HCT116 (cell line): ENCODE measurements at regions of chr7 and their contacts with region 1.

Region 1: GRCh38 chr7:93799750-93800357 is 90.7 kb downstream of the TFPI2 start:
- DNase-seq: no peak
- ATAC-seq: no peak; the same call in 1 of the 2 replicates
- H3K4me3 ChIP-seq: no peak overlapping the region
- H3K27ac ChIP-seq: no peak overlapping the region
- H3K4me1 ChIP-seq: no peaks in the 10 kb centered on the region
- H3K27me3 ChIP-seq: no peaks in the 10 kb centered on the region
- CTCF ChIP-seq: peak; percentile 22 to 61 (median 27); a peak in 4 of 6 replicates
- POLR2A ChIP-seq: no peak
- RAD21 ChIP-seq: peak; percentile 48

Region 2: GRCh38 chr7:93715234-93715633 is 84.6 kb before region 1 on chr7:
- CTCF ChIA-PET with region 1: no interaction called
- POLR2A ChIA-PET with region 1: no interaction called
- RAD21 ChIA-PET with region 1: no interaction called
- intact Hi-C with region 1: no loop called
- DNase-seq: peak; percentile 28
- ATAC-seq: peak; percentile 81
- H3K4me3 ChIP-seq: no peak overlapping the region
- H3K27ac ChIP-seq: no peak overlapping the region
- H3K4me1 ChIP-seq: no peaks in the 10 kb centered on the region
- H3K27me3 ChIP-seq: peaks cover 3% of the 10 kb centered on the region; the same call in 1 of the 2 replicates
- CTCF ChIP-seq: peak; percentile 23 to 68 (median 64); a peak in 5 of 6 replicates
- POLR2A ChIP-seq: no peak
- RAD21 ChIP-seq: peak; percentile 56

Region 3: DNA sequence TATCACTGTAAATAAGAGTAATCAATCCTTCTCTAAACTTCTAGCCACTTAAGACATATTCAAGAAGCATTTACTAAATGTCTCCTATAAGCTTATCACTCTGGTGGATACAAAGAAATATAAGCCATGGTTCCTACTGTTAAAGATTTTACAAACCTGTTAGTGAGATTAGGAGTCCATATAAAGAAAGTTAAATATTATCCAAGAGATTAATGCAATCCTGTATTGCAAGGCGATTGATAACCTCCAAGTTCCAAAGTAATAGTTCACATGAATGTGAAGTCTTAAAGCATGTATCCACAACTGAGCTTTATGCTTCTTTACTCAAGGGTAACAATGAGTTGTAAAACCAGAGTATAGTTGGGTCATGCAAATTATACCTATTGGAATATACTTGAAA is 216.9 kb after region 1 on chr7:
- CTCF ChIA-PET with region 1: no interaction called
- POLR2A ChIA-PET with region 1: no interaction called
- RAD21 ChIA-PET with region 1: no interaction called
- intact Hi-C with region 1: loop called (anchors 5 kb)
- DNase-seq: no peak
- ATAC-seq: no peak
- H3K4me3 ChIP-seq: no peak overlapping the region
- H3K27ac ChIP-seq: no peak overlapping the region
- H3K4me1 ChIP-seq: no peaks in the 10 kb centered on the region
- H3K27me3 ChIP-seq: 0 out of 2 replicates have a peak, but pooled peaks cover 3% of the 10 kb centered on the region
- CTCF ChIP-seq: no peak
- POLR2A ChIP-seq: no peak
- RAD21 ChIP-seq: no peak

Region 4: DNA sequence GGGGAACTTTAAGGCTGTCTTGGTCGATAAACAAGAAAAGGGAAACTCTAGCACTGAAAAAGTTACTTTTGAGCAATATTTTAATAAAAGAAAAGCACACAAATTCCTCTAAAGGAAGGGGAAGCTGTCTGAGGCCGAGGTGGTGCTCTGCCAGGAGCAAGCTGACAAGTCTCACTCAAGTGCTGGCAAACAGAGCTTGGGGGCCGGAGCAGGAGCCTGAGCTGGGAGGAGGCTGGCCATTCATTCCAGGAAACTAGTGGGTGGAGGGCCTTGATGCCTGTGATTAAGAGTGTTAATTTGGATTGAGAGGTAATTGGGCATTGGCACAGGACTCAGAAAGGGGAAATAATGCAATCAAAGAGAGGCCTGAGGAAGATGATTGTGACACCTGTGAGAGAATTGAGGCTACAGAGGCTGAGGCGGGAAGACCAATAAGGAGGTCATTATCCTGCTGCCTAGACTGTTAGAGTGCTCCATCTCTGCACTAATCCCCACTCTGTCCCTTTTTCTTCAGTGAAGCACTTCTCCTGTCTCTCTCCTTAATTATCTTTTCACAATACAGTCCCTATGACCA is 439.9 kb after region 1 on chr7:
- CTCF ChIA-PET with region 1: no interaction called
- POLR2A ChIA-PET with region 1: no interaction called
- RAD21 ChIA-PET with region 1: no interaction called
- intact Hi-C with region 1: loop called (anchors 10 kb)
- DNase-seq: no peak
- ATAC-seq: no peak
- H3K4me3 ChIP-seq: no peak overlapping the region
- H3K27ac ChIP-seq: no peak overlapping the region
- H3K4me1 ChIP-seq: no peaks in the 10 kb centered on the region
- H3K27me3 ChIP-seq: no peaks in the 10 kb centered on the region
- CTCF ChIP-seq: no peak
- POLR2A ChIP-seq: no peak
- RAD21 ChIP-seq: no peak

Region 5: GRCh38 chr7:94395141-94396036 is 595.5 kb after region 1 on chr7:
- CTCF ChIA-PET with region 1: no interaction called
- POLR2A ChIA-PET with region 1: no interaction called
- RAD21 ChIA-PET with region 1: no interaction called
- intact Hi-C with region 1: loop called (anchors 5 kb)
- DNase-seq: peak; percentile 59
- ATAC-seq: peak; percentile 96
- H3K4me3 ChIP-seq: no peak overlapping the region
- H3K27ac ChIP-seq: no peak overlapping the region
- H3K4me1 ChIP-seq: no peaks in the 10 kb centered on the region
- H3K27me3 ChIP-seq: no peaks in the 10 kb centered on the region
- CTCF ChIP-seq: peak; percentile 64 to 81 (median 78)
- POLR2A ChIP-seq: no peak
- RAD21 ChIP-seq: peak; percentile 87